ENCODE measurements at regions of chr11 and their contacts with region 1.

Region 1: GRCh38 chr11:93921695-93922468 is 71.5 kb upstream of the VSTM5 start:
- DNase-seq: peak; percentile 79
- ATAC-seq: peak; percentile 99
- H3K4me3 Mint-ChIP-seq: no peak overlapping the region
- H3K27ac Mint-ChIP-seq: no peak overlapping the region
- H3K4me1 Mint-ChIP-seq: 0 out of 2 replicates have a peak, but pooled peaks cover 7% of the 10 kb centered on the region
- H3K27me3 Mint-ChIP-seq: peaks cover 2% of the 10 kb centered on the region; the same call in 1 of the 2 replicates
- CTCF ChIP-seq: peak; percentile 75

Region 2: DNA sequence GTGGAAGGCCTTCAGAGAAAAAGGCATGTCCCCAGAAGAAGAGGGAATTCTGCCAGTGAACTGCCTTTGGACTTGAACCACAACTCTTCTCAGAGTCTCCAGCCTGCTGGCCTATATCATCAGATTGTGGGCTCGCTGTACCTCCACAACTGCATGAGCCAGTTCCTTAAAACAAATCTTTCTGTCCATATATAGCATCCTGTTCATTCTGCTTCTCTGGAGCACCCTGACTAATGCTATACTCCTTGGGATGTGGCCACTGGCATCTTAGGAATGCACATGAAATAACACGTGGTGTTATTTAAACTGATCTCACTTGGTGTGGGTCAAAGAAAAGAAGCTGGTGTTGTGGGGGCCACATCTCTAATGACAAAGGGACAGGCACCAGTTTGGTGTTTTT is 13.2 kb before region 1 on chr11:
- CTCF ChIA-PET with region 1: interaction called, 13 read pairs
- POLR2A ChIA-PET with region 1: no interaction called
- DNase-seq: no peak
- ATAC-seq: peak; percentile 53
- H3K4me3 Mint-ChIP-seq: no peak overlapping the region
- H3K27ac Mint-ChIP-seq: no peak overlapping the region
- H3K4me1 Mint-ChIP-seq: peaks cover 11% of the 10 kb centered on the region
- H3K27me3 Mint-ChIP-seq: no peaks in the 10 kb centered on the region
- CTCF ChIP-seq: no peak

Region 3: GRCh38 chr11:94128746-94129511 is 207.0 kb after region 1 on chr11 and contains the start of gene PANX1:
- CTCF ChIA-PET with region 1: interaction called, 17 read pairs
- POLR2A ChIA-PET with region 1: no interaction called
- DNase-seq: peak; percentile 75
- ATAC-seq: peak; percentile 78
- H3K4me3 Mint-ChIP-seq: no peak within 1 kb of the TSS
- H3K27ac Mint-ChIP-seq: peak within 1 kb of the TSS; percentile 90
- H3K4me1 Mint-ChIP-seq: peaks cover 32% of the 10 kb centered on the region
- H3K27me3 Mint-ChIP-seq: no peaks in the 10 kb centered on the region
- CTCF ChIP-seq: no peak
- total RNA-seq, gene PANX1: 21.9 to 22.9 TPM (median 22.2 TPM) in 3 replicates

Region 4: DNA sequence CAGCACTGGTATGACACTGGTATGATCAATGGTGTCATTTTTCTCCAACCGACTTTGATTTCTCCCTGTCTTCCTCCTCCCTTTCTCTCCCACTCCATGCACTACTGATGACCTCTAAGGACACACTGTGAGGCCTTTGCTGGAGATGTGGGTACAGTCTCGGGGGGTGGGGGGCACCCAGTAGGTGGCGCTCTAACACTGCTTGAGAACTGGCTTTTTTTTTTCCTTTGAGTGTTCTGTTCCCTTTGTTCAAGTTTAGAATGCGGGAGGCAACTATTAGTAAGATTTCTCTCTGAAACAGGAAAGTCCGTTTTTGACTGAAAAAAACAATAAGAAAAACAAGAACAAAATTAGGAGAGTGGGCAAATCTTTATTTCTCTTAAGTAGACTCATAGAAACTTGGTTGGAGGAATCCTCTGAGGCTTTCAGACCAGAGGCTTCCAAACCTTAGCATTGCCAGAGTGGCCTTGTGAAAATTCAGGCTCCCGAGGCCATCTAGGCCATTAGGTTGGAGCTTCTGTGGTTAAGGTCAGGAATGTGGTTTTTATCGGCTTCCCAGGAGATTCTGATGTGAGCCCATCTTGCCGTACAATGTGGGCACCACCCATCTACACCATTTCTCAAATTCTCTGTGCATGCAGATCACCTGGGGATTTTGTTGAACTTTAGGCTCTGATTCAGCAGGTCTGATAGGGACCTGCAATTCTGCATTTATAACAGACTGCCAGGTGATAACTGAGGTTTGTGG is 250.0 kb after region 1 on chr11:
- CTCF ChIA-PET with region 1: interaction called, 10 read pairs
- POLR2A ChIA-PET with region 1: no interaction called
- DNase-seq: peak; percentile 75
- ATAC-seq: peak; percentile 89
- H3K4me3 Mint-ChIP-seq: no peak overlapping the region
- H3K27ac Mint-ChIP-seq: no peak overlapping the region
- H3K4me1 Mint-ChIP-seq: peaks cover 62% of the 10 kb centered on the region
- H3K27me3 Mint-ChIP-seq: no peaks in the 10 kb centered on the region
- CTCF ChIP-seq: peak; percentile 70